GM12878 (cell line): ENCODE measurements at regions of chr7 and their contacts with region 1.

Region 1: DNA sequence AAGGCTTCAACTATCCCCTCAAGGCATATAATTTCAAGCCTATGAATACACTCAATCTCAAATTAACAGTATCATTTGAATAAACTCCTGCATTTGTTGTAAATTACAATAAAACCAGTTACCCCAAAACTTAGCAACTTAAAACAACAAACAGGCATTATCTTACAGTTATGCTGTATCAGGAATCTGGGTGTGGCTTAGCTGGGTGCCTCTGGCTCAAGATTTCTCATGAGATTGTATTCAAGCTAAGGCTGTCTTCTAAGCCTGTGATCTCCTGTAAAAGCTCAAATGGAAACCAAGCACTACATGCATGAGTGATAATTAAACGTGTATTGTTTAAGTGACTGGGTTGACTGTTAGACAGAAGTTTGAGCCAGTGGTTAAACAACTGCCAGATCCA is 341.0 kb upstream of the PHF14 start:
- DNase-seq: no peak
- ATAC-seq: no peak
- H3K4me3 ChIP-seq: no peak overlapping the region
- H3K27ac ChIP-seq: no peak overlapping the region
- H3K4me1 ChIP-seq: no peaks in the 10 kb centered on the region
- H3K27me3 ChIP-seq: no peaks in the 10 kb centered on the region
- CTCF ChIP-seq: no peak
- EP300 ChIP-seq: no peak
- POLR2A ChIP-seq: no peak
- RAD21 ChIP-seq: no peak

Region 2: GRCh38 chr7:10463701-10464100 is 169.0 kb before region 1 on chr7:
- CTCF ChIA-PET with region 1: no interaction called
- POLR2A ChIA-PET with region 1: no interaction called
- RAD21 ChIA-PET with region 1: no interaction called
- SMC1A ChIA-PET with region 1: no interaction called
- in situ Hi-C with region 1: no loop called
- intact Hi-C with region 1: no loop called
- DNase-seq: no peak
- ATAC-seq: no peak
- H3K4me3 ChIP-seq: no peak overlapping the region
- H3K27ac ChIP-seq: no peak overlapping the region
- H3K4me1 ChIP-seq: no peaks in the 10 kb centered on the region
- H3K27me3 ChIP-seq: no peaks in the 10 kb centered on the region
- CTCF ChIP-seq: no peak
- EP300 ChIP-seq: no peak
- POLR2A ChIP-seq: no peak
- RAD21 ChIP-seq: no peak

Region 3: DNA sequence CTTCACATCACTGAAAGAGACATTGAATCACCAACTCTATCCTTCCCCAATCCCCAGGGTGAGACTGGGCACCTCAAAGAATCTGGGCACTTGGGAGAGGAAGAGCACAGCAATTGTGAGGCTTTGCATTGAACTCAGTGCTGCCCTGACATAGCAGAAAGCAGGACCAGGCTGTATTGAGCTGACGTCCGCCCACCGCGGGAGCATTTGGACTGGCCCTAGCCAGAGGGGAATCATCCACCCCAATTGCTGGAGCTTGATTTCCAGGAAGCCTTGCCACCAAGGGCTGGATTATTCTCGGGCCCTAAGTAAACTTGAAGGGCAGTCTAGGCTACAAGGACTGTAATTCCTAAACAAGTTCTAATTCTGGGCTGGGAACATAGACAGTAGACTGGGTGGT is 75.3 kb before region 1 on chr7:
- CTCF ChIA-PET with region 1: no interaction called
- POLR2A ChIA-PET with region 1: no interaction called
- RAD21 ChIA-PET with region 1: no interaction called
- SMC1A ChIA-PET with region 1: no interaction called
- in situ Hi-C with region 1: no loop called
- intact Hi-C with region 1: no loop called
- DNase-seq: no peak
- ATAC-seq: no peak
- H3K4me3 ChIP-seq: no peak overlapping the region
- H3K27ac ChIP-seq: no peak overlapping the region
- H3K4me1 ChIP-seq: no peaks in the 10 kb centered on the region
- H3K27me3 ChIP-seq: no peaks in the 10 kb centered on the region
- CTCF ChIP-seq: no peak
- EP300 ChIP-seq: no peak
- POLR2A ChIP-seq: no peak
- RAD21 ChIP-seq: no peak

Region 4: DNA sequence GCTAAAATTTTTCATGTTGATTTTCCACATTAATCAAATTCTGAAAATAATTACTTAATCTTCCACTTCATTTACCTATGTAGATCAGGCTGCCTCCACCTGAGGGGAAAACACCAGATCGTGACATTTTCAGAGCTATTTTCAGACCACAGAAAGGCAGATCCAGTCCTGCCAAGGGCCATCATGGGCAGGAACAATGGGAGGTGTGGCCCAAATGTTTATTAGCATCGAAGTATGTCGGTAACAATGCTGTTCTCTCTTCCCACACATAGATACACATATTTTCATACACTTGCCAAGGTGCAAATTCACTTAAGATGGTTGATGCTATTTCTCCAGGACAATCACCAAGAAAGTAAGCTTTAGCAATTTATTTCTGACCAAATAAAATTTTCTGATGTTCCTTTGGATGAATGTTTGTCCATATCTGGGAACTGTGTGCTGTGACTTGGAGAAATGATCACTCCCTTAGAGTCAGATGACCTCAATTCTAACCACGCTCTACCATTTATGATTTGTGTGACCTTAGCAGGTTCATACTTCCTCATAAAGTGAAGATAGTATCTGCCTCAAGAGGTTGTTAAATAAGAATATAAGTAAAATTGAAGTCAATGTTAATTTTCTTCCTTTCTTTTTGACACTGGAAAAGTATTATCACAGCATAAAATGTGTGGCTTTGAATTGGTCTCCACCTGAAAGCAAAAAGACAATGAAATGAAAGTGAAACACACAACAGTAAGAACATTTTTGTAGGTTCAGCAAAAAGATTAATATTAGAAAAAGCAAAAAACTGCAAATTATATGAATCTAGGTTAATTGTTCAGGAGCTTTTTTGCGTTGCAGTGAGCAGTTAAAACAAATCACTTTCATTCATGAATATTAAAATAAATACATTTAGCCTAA is 30.5 kb after region 1 on chr7:
- CTCF ChIA-PET with region 1: no interaction called
- POLR2A ChIA-PET with region 1: no interaction called
- RAD21 ChIA-PET with region 1: no interaction called
- SMC1A ChIA-PET with region 1: no interaction called
- in situ Hi-C with region 1: no loop called
- intact Hi-C with region 1: no loop called
- DNase-seq: no peak
- ATAC-seq: peak; percentile 69
- H3K4me3 ChIP-seq: no peak overlapping the region
- H3K27ac ChIP-seq: no peak overlapping the region
- H3K4me1 ChIP-seq: no peaks in the 10 kb centered on the region
- H3K27me3 ChIP-seq: no peaks in the 10 kb centered on the region
- CTCF ChIP-seq: no peak
- EP300 ChIP-seq: no peak
- POLR2A ChIP-seq: no peak
- RAD21 ChIP-seq: no peak

Region 5: GRCh38 chr7:10802526-10802925 is 169.8 kb after region 1 on chr7:
- CTCF ChIA-PET with region 1: no interaction called
- POLR2A ChIA-PET with region 1: no interaction called
- RAD21 ChIA-PET with region 1: no interaction called
- SMC1A ChIA-PET with region 1: no interaction called
- in situ Hi-C with region 1: no loop called
- intact Hi-C with region 1: no loop called
- DNase-seq: no peak
- ATAC-seq: no peak
- H3K4me3 ChIP-seq: no peak overlapping the region
- H3K27ac ChIP-seq: no peak overlapping the region
- H3K4me1 ChIP-seq: no peaks in the 10 kb centered on the region
- H3K27me3 ChIP-seq: no peaks in the 10 kb centered on the region
- CTCF ChIP-seq: no peak
- EP300 ChIP-seq: no peak
- POLR2A ChIP-seq: no peak
- RAD21 ChIP-seq: no peak

Region 6: GRCh38 chr7:11212080-11212711 is 579.5 kb after region 1 on chr7:
- CTCF ChIA-PET with region 1: interaction called, 6 read pairs
- POLR2A ChIA-PET with region 1: no interaction called
- RAD21 ChIA-PET with region 1: no interaction called
- SMC1A ChIA-PET with region 1: no interaction called
- in situ Hi-C with region 1: no loop called
- intact Hi-C with region 1: loop called (anchors 10 kb)
- DNase-seq: peak; percentile 12
- ATAC-seq: peak; percentile 92
- H3K4me3 ChIP-seq: no peak overlapping the region
- H3K27ac ChIP-seq: no peak overlapping the region
- H3K4me1 ChIP-seq: no peaks in the 10 kb centered on the region
- H3K27me3 ChIP-seq: peaks cover 0 to 2% of the 10 kb centered on the region in 2 experiments; a peak in 3 of 4 replicates
- CTCF ChIP-seq: peak; percentile 74 to 81 (median 78)
- EP300 ChIP-seq: no peak
- POLR2A ChIP-seq: no peak
- RAD21 ChIP-seq: peak; percentile 92